GM10248 (cell line): ENCODE measurements at regions of chr7 and their contacts with region 1.

Region 1: GRCh38 chr7:134750083-134751062 is 29.1 kb upstream of the CALD1 start:
- DNase-seq: peak; percentile 68
- CTCF ChIP-seq: peak; percentile 73

Region 2: GRCh38 chr7:134737566-134738345 is 12.6 kb before region 1 on chr7:
- CTCF ChIA-PET with region 1: interaction called, 15 read pairs
- POLR2A ChIA-PET with region 1: no interaction called
- DNase-seq: no peak
- CTCF ChIP-seq: no peak